ENCODE measurements at regions of chr17 and their contacts with region 1.

Region 1: DNA sequence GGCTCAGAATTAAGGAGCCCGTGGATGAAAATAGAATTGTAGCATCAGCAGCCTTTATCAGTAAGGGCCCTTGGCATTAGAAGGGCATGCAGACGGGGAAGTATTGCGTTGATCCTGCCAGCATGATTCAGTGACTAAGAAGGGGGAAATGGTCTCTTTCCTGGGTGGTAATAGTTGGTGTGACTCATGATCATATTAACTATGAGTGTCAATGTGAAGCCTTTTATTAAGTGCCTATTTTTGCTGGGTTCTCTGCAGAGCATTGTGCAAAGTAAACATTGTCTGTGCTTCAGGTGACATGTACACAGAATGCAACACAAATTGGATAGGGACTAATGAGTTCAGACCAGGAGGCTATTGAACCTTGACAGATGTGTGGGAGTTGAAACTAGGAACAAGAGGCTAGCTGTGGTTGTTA is 24.5 kb downstream of the RCVRN start:
- DNase-seq: no peak
- ATAC-seq: peak; percentile 34

Region 2: GRCh38 chr17:9790889-9791876 is 89.4 kb before region 1 on chr17 and contains the start of gene DHRS7C:
- intact Hi-C with region 1: loop called (anchors 10 kb)
- DNase-seq: peak; percentile 66
- ATAC-seq: peak; percentile 93
- total RNA-seq, gene DHRS7C: 71.6 TPM

Region 3: DNA sequence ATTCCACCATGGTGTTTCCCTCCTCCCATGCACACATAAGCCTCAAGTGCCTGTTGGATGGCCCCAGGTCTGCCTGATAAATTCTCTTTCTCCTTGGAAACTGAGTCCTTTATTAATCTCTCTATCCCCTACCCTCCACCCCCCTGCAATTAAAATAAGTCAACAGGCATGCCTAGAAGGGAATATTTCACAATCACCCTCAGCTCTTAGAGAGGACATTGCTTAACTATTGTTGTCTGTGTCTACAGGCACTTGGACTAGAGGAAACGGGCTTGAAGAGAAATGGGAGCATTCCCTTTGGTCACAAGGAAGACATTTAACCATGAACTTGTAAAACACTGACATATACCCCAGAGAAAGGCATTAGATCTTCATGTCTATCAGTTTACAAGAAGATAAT is 15.0 kb before region 1 on chr17:
- intact Hi-C with region 1: no loop called
- DNase-seq: no peak
- ATAC-seq: no peak

Region 4: DNA sequence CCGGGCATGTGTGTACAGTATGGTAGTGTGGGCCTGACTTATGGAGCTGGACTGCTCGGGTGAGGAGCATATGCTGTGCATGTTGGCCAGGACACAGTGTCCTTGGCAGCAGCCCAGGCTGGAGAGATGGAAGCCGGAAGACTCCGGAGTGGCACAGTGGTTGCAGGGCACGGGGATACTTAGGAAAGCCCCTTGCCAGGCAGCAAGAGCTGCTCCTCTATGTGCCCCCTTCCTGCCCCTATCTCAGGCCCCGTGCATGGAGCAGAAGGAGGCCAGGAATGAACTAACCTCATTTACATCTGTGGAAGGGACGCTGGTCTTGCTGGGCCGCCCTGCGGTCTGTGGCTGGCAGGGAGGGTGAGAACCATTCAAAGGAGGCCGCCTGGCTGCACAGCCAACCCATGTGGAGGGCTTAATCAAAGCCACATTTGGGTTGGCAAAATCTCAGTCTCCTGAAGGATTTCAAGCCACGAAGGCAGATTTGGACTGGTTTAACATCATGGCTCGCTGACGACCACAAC is 56.7 kb after region 1 on chr17:
- intact Hi-C with region 1: no loop called
- DNase-seq: peak; percentile 90
- ATAC-seq: peak; percentile 88

Region 5: GRCh38 chr17:10059369-10060211 is 179.0 kb after region 1 on chr17:
- intact Hi-C with region 1: no loop called
- DNase-seq: peak; percentile 70
- ATAC-seq: peak; percentile 62